ENCODE measurements at regions of chr7 and their contacts with region 1.

Region 1: DNA sequence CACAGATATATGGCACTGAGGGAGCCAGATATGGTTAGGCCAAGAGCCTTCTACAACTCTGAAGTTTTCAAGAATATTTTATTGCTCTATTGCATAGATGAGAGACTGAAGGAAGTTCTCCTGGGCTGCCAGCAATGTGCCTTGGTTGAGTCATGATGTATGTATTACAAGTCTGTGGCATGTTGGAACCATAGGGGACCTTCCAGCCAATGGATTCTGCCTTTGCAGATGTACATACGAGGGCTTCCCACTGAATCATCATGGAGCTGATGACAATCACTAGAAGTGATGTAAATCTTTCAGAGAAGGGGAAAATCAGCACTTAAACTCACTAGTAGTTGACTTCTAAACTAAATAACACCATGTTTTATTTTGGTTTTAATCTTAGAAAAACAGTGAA is 419.5 kb downstream of the PHTF2 start:
- DNase-seq: no peak
- ATAC-seq: no peak
- H3K4me3 ChIP-seq: no peak overlapping the region
- H3K27ac ChIP-seq: no peak overlapping the region
- H3K4me1 ChIP-seq: peaks cover 0 to 1% of the 10 kb centered on the region in 2 donors
- H3K27me3 ChIP-seq: no peaks in the 10 kb centered on the region

Region 2: DNA sequence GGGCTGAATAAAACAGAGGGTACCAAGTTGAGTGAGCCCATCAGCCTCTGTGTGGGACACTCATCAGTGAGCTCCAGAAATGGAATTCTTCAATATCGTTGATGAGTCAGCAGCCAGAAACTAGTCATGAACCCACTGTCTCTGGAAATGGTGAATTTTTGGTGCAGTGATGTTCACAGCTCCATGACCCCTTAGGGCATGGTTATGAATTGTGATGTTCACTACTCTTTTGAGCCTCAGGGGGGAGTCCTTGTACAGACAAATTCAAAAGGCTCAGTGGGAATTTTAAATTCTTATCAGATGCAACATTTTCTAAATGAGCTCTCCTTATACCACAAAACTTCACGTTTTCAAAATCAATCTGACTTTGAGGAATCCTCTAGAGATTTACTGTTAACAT is 83.8 kb before region 1 on chr7:
- intact Hi-C with region 1: loop called in 1 of 2 experiments (anchors 10 kb)
- DNase-seq: no peak
- ATAC-seq: no peak
- H3K4me3 ChIP-seq: no peak overlapping the region
- H3K27ac ChIP-seq: no peak overlapping the region
- H3K4me1 ChIP-seq: peaks cover 0 to under 1% of the 10 kb centered on the region in 2 donors
- H3K27me3 ChIP-seq: no peaks in the 10 kb centered on the region

Region 3: GRCh38 chr7:78197447-78197846 is 20.6 kb before region 1 on chr7:
- intact Hi-C with region 1: no loop called
- DNase-seq: no peak
- ATAC-seq: no peak
- H3K4me3 ChIP-seq: no peak overlapping the region
- H3K27ac ChIP-seq: no peak overlapping the region
- H3K4me1 ChIP-seq: peaks cover 3 to 7% of the 10 kb centered on the region in 2 donors
- H3K27me3 ChIP-seq: no peaks in the 10 kb centered on the region